ENCODE measurements at regions of chr5 and their contacts with region 1.

Region 1: DNA sequence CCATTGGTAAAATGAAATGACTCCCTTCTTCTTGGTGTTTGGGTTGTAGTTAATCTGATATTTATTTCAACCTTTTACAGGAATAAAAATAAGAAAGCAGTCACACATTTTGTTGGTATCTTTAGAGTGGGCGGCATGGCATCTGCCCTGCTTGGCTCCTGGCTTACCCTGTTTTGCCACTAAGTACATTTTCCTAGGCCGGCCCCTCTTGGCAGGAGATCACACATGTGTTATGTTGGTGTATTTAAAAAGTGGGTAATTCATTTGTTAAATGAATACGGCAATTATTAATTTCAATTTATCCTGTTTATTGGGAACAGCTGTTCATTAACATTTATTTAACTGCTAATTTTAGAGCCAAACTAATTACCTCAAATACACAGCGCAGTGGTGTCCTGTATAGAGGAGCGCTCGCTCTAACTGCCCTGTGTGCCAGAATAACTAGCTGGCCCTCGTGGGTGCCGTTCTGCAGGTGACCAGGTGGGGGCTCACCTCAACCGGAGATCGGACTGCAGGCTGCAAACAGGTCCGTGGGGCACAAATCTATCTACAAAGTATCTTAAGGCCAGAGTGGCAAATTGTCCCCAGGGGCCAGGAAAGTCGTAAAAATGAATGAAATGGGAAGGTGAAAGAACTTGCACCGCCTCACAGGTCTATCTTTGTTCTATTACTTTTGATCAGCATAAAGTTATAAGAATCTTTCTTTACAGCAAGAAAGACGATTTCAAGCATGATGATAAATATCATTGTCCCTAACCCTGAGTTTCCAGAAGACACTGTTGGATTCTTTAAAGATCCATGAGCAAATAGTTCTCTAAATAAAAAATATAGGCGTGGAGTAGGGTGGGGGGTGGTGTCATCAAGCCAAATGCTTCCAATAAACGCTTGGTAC is 26.2 kb upstream of the GPR151 start:
- DNase-seq: peak; percentile 46 to 74
- ATAC-seq: peak; percentile 96

Region 2: DNA sequence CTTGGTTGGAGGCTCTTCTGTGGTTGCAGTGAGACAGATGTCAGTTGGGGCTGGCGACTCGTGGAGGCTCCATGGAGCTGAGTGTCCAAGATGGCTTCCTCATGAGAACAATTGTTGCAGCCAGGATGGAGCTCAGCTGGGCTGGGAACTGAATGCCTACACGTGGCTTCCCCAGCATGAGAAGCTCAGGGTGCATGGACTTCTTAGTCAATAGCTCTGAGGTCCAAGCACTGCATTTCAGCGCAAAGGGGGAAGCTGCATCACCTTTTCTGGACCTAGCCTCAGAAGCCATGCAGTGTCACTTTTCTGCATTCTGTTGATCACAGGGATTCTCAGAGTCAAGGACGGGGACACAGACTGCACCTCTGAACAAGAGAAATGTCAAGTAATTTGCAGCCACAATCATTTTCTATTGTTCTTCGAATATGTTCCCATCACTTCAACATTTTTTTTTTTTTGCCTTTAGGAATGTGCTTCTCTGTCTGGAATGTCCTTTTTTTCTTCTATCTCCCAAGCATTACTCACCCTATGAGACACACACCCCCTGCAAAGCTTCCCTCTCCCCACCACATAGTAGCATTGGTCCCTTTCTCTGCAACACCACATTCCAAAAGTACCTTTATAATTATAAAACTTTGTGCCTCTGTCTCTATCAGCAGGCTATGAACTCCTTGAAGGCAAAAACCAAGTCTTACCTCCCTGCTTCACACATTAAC is 635.1 kb after region 1 on chr5:
- intact Hi-C with region 1: loop called in 1 of 2 experiments (anchors 5 kb)
- DNase-seq: no peak
- ATAC-seq: no peak

Measured in left colon (tissue), 2 donors.